ENCODE measurements at regions of chr2 and their contacts with region 1.

Region 1: DNA sequence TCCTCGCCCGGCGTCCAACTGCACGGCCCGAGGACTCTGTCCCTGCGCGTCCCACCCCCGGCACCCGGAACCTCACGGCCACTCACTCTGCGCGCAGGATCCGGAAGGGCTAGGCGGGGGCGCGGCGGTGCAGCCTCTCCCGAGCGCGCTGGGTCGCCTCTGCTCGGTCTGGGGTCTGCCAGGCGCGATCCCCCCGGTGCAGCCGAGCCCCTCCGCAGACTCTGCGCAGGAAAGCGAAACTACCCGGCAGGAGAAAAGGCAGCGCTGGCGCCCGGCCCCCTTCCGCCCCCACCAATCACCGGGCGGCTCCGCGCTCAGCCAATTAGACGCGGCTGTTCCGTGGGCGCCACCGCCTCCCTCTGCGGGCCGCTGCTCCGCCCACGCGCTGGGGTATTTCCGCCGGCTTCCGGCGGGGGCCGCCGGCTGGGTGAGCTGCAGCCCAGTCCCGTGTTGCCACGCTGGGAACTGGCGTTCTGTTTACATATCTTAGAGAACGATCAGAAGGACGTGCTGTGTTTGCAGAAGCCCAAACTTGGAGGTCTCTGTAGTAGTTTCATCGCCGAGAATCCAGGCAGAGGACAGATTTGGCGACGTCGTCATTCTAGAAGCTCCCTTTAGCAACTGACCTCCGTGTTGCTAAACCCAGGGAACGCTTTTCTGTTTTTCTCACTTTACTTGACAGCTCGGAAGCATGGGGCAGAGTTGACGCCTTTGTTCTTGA is at the start of gene STAT1:
- DNase-seq: peak; percentile 96
- H3K4me3 ChIP-seq: peak within 1 kb of the TSS; percentile 75 to 94 (median 84)
- H3K27ac ChIP-seq: peak within 1 kb of the TSS; percentile 92 to 96 (median 94)
- H3K4me1 ChIP-seq: peaks cover 0 to 35% (median 25%) of the 10 kb centered on the region in 4 donors
- H3K27me3 ChIP-seq: no peaks in the 10 kb centered on the region
- CTCF ChIP-seq: peak in 1 of 4 experiments; percentile 10
- EP300 ChIP-seq: peak in 2 of 4 donors; percentile 72 to 77
- POLR2A ChIP-seq: peak; percentile 87
- total RNA-seq, gene STAT1: 47.4 to 78.5 (median 55.8) TPM

Region 2: GRCh38 chr2:190853531-190854383 is 160.3 kb before region 1 on chr2:
- intact Hi-C with region 1: loop called (anchors 5 kb)
- DNase-seq: no peak
- H3K4me3 ChIP-seq: no peak overlapping the region
- H3K27ac ChIP-seq: no peak overlapping the region
- H3K4me1 ChIP-seq: peaks cover 0 to 3% (median under 1%) of the 10 kb centered on the region in 4 donors
- H3K27me3 ChIP-seq: no peaks in the 10 kb centered on the region
- CTCF ChIP-seq: no peak
- EP300 ChIP-seq: no peak
- POLR2A ChIP-seq: no peak

Region 3: DNA sequence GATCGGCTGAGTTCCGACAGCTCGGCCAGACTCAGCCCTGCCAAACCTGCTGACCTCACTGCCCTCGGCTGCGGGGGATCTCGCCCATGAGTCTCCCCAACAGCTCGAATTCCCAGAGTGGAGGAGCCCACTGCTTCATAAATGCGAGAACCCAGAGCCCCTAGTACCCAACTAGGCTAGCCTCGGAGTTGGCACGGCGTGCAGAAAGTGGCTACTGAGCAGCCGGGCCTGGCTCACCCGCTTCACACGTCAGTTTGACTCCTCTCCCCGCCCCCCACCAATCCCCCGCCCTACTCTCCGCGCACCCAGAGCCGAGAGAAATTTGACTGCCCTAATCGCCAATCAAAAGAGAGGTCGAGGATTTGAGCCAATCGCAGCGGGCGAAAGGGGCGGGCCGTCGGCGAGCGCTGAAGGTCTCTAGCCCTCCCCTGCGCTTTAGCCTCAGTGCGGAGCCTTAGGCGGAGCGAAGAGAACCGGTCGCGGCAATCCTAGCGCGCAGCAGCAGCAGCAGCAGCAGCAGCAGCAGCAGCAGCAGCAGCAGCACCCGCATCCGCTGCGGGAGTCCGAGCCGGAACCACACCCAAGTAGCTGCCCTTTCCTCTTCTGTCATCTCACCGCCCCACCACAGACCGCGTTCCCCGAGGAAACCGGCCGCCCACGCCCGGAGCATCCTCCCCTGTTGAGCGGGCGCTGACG is 133.6 kb before region 1 on chr2 and contains the start of gene GLS:
- intact Hi-C with region 1: loop called (anchors 5 kb)
- DNase-seq: peak; percentile 99
- H3K4me3 ChIP-seq: peak within 1 kb of the TSS; percentile 70 to 94 (median 92)
- H3K27ac ChIP-seq: peak within 1 kb of the TSS; percentile 87 to 97 (median 96)
- H3K4me1 ChIP-seq: peaks cover 0 to 36% (median 25%) of the 10 kb centered on the region in 4 donors
- H3K27me3 ChIP-seq: no peaks in the 10 kb centered on the region
- CTCF ChIP-seq: no peak
- EP300 ChIP-seq: peak in 1 of 4 donors; percentile 8
- POLR2A ChIP-seq: peak; percentile 97 to 98
- total RNA-seq, gene GLS: 87.1 to 139 (median 111) TPM

Region 4: DNA sequence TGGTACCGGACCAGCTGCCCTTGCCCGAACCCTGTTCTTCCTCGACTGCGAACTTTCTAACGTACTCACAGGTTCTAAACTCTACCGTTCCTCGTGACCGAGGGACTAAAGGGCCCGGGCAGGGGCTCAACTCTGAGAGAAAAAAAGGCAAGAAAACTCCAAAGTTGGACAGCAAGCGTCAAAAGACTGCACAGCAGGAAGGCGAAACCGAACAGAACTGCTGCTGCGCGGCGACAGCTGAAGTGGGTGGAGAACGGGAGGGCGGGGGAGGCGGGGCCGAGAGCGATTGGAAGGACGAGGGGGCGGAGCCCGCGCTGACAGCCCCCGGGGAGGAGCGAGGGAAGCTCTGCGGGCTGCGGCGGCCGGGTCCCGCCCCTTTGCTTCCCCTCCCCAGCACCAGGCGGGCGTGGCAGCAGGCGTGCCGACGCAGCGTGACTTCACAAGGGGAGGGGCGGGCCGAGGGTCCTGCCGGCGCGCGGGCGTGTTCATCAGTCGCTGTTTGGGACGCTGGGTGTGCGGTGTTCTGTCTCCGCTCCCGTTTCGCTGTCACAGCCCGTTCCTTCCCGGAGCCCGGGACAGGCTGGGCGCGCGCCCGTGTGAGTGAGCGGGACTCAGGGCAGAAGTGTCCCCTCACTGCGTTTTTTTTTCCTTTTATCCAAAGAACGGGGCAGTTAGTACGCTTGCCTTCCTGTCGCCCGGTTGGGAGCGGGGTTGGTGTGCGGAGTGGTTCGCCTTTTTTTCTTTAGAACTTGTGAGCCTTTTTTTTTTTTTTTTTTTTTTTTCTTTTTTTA is 663.7 kb after region 1 on chr2 and contains the start of gene NABP1:
- intact Hi-C with region 1: loop called (anchors 2 kb)
- DNase-seq: peak; percentile 99
- H3K4me3 ChIP-seq: peak within 1 kb of the TSS; percentile 53 to 72 (median 59)
- H3K27ac ChIP-seq: peak within 1 kb of the TSS; percentile 85 to 96 (median 90)
- H3K4me1 ChIP-seq: peaks cover 0 to 16% (median 5%) of the 10 kb centered on the region in 4 donors
- H3K27me3 ChIP-seq: no peaks in the 10 kb centered on the region
- CTCF ChIP-seq: no peak
- EP300 ChIP-seq: peak in 1 of 4 donors; percentile 39
- POLR2A ChIP-seq: peak; percentile 87 to 89
- total RNA-seq, gene NABP1: 8.2 to 12.7 (median 9.8) TPM

Measured in sigmoid colon (tissue), 7 donors.